ENCODE measurements at regions of chr11 and their contacts with region 1.

Region 1: DNA sequence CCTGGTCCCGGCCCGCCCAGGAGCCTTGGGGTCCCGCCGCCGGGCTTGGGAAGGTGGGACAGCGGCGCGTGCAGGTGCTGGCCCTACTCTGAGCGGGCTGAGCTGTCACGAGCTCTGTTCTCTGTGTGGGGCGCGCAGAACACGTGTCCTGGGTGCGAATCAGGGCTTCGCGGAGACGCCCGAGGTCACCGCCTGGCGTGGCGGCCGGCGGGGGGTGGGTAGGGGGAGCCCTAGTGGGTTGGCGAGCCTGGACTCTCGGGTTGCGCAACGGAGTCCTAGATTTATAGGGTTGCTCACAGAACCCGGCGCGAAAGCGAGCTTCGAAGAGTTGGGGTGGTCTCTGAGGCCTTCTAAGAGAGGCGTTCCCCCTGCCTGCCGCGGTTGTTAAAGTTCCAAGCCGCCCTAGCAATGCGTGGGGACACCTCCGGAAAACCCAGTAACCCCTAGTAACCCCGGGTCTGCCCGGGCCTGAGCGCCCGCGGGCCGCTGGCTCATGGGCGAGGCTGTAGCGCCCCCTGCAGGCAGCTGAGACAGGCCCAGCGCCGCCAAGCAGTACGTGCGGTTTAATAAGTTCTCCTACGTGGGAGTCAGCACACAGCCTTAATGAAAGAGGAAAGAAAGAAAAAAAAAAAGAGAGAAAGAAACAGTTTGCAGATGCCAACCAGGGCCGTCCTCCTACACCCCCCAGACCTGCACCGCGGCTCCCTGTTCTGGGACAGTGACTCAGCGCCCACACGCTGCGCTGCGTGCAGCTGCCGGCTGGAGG is 2.8 kb downstream of the ADM start:
- DNase-seq: peak; percentile 88 to 93 (median 91)
- H3K4me3 ChIP-seq: peak overlapping the region in 3 of 4 donors; percentile 10 to 67 (median 25)
- H3K27ac ChIP-seq: peak overlapping the region; percentile 2 to 81 (median 71)
- H3K4me1 ChIP-seq: peaks cover 11 to 36% of the 10 kb centered on the region in 2 donors
- H3K27me3 ChIP-seq: no peaks in the 10 kb centered on the region
- CTCF ChIP-seq: peak; percentile 98 to 100 (median 100)
- POLR2A ChIP-seq: peak in 1 of 2 donors; percentile 4

Region 2: GRCh38 chr11:9757809-9758636 is 549.6 kb before region 1 on chr11:
- intact Hi-C with region 1: loop called in 1 of 2 experiments (anchors 10 kb)
- DNase-seq: peak; percentile 84 to 92 (median 88)
- H3K4me3 ChIP-seq: peak overlapping the region; percentile 28 to 86 (median 44)
- H3K27ac ChIP-seq: peak overlapping the region in 4 of 5 donors; percentile 64 to 84 (median 78)
- H3K4me1 ChIP-seq: peaks cover 12 to 23% of the 10 kb centered on the region in 2 donors
- H3K27me3 ChIP-seq: no peaks in the 10 kb centered on the region
- CTCF ChIP-seq: peak in 5 of 6 experiments; percentile 31 to 97 (median 96)
- POLR2A ChIP-seq: no peak

Region 3: GRCh38 chr11:9982800-9983579 is 324.6 kb before region 1 on chr11:
- intact Hi-C with region 1: loop called in 1 of 2 experiments (anchors 5 kb)
- DNase-seq: no peak
- H3K4me3 ChIP-seq: no peak overlapping the region
- H3K27ac ChIP-seq: no peak overlapping the region
- H3K4me1 ChIP-seq: peaks cover 0 to 3% of the 10 kb centered on the region in 2 donors
- H3K27me3 ChIP-seq: no peaks in the 10 kb centered on the region
- CTCF ChIP-seq: no peak
- POLR2A ChIP-seq: no peak

Region 4: DNA sequence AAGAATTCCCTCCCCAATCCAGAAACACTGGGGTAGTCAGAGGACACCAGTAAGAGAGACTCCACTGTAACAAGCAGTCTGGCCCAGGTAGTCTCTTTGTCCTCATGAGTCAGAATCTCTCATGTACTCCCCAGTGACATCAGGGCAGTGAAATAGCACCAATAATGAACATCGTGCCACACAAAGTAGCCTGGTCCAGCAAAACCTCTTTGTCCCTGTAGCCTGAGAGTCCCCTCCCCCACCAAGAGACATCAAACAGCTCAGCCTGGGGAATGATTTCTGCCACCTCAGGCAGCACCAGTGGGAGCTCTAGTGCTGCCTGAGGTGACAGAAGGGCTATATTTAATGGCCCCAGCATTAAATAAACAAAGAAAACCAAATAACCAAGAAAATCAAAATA is 101.7 kb before region 1 on chr11:
- intact Hi-C with region 1: loop called (anchors 2 to 5 kb)
- DNase-seq: no peak
- H3K4me3 ChIP-seq: no peak overlapping the region
- H3K27ac ChIP-seq: no peak overlapping the region
- H3K4me1 ChIP-seq: no peaks in the 10 kb centered on the region
- H3K27me3 ChIP-seq: no peaks in the 10 kb centered on the region
- CTCF ChIP-seq: no peak
- POLR2A ChIP-seq: no peak

Region 5: GRCh38 chr11:10211470-10211869 is 96.2 kb before region 1 on chr11:
- intact Hi-C with region 1: loop called (anchors 2 to 5 kb)
- DNase-seq: no peak
- H3K4me3 ChIP-seq: no peak overlapping the region
- H3K27ac ChIP-seq: no peak overlapping the region
- H3K4me1 ChIP-seq: no peaks in the 10 kb centered on the region
- H3K27me3 ChIP-seq: no peaks in the 10 kb centered on the region
- CTCF ChIP-seq: no peak
- POLR2A ChIP-seq: no peak

Measured in adrenal gland (tissue), 19 donors.